AG04450 (cell line): ENCODE measurements at regions of chr9 and their contacts with region 1.

Region 1: GRCh38 chr9:72280913-72281500 is 84.0 kb downstream of the ZFAND5 start:
- DNase-seq: no peak
- H3K4me3 ChIP-seq: no peak overlapping the region
- H3K27ac ChIP-seq: no peak overlapping the region
- H3K27me3 ChIP-seq: peaks cover 8% of the 10 kb centered on the region
- CTCF ChIP-seq: peak; percentile 99

Region 2: GRCh38 chr9:72038890-72039410 is 242.1 kb before region 1 on chr9:
- CTCF ChIA-PET with region 1: interaction called, 164 read pairs
- POLR2A ChIA-PET with region 1: no interaction called
- DNase-seq: peak; percentile 61
- H3K4me3 ChIP-seq: no peak overlapping the region
- H3K27ac ChIP-seq: no peak overlapping the region
- H3K27me3 ChIP-seq: peaks cover 6% of the 10 kb centered on the region
- CTCF ChIP-seq: peak; percentile 96

Region 3: GRCh38 chr9:72592502-72593403 is 311.7 kb after region 1 on chr9:
- CTCF ChIA-PET with region 1: interaction called, 35 read pairs
- POLR2A ChIA-PET with region 1: no interaction called
- DNase-seq: peak; percentile 42
- H3K4me3 ChIP-seq: no peak overlapping the region
- H3K27ac ChIP-seq: no peak overlapping the region
- H3K27me3 ChIP-seq: no peaks in the 10 kb centered on the region
- CTCF ChIP-seq: peak; percentile 75

Region 4: DNA sequence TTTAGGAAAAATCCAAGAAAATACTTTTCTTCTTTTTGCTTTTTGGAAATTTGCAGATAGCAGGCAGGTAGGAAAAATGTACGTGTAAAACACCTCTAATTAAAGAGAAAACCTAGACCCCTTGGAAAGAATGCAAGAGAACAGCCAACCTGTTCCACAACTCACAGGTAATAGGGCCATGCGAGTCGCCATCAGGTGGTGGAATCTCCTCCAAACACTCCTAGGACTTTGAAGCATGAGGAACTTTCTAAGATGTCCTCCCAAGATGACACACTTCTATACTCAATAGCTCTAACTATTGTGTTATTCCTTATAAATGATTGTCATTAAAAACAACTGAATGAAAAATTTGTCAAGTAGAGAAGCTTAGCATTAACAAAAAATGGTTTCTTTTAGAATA is 414.4 kb after region 1 on chr9:
- CTCF ChIA-PET with region 1: interaction called, 10 read pairs
- POLR2A ChIA-PET with region 1: no interaction called
- DNase-seq: no peak
- H3K4me3 ChIP-seq: no peak overlapping the region
- H3K27ac ChIP-seq: no peak overlapping the region
- H3K27me3 ChIP-seq: no peaks in the 10 kb centered on the region
- CTCF ChIP-seq: no peak

Region 5: GRCh38 chr9:72826996-72827949 is 546.3 kb after region 1 on chr9:
- CTCF ChIA-PET with region 1: interaction called, 119 read pairs
- POLR2A ChIA-PET with region 1: no interaction called
- DNase-seq: no peak
- H3K4me3 ChIP-seq: no peak overlapping the region
- H3K27ac ChIP-seq: no peak overlapping the region
- H3K27me3 ChIP-seq: no peaks in the 10 kb centered on the region
- CTCF ChIP-seq: no peak

Region 6: GRCh38 chr9:73023025-73023541 is 742.1 kb after region 1 on chr9:
- CTCF ChIA-PET with region 1: interaction called, 44 read pairs
- POLR2A ChIA-PET with region 1: no interaction called
- DNase-seq: peak; percentile 27
- H3K4me3 ChIP-seq: no peak overlapping the region
- H3K27ac ChIP-seq: no peak overlapping the region
- H3K27me3 ChIP-seq: no peaks in the 10 kb centered on the region
- CTCF ChIP-seq: peak; percentile 87